Dendritic cell treated with granulocyte-macrophage colony-stimulating factor and Interleukin-4, amounts not matched to agents 40 ng/mL and 50 ng/mL, for 4 days (primary cell): ENCODE measurements at regions of chr10 and their contacts with region 1.

Region 1: DNA sequence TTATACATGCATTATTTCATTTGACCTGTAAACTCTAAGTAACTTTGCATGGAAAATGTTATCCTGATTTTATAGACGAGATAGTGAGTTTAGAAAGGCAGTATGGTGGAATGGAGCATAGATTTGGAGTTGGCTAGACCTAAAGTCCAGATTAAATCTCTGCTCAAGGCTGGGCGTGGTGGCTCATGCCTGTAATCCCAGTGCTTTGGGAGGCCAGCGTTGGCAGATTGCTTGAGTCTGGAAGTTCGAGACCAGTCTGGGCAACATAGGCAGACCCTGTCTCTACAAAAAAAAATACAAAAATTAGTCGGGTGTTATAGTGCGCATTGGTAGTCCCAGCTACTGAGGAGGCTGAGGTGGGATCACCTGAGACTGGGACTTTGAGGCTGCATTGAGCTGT is 9.4 kb downstream of the PTEN start:
- H3K4me3 Mint-ChIP-seq: no peak overlapping the region
- H3K27ac Mint-ChIP-seq: no peak overlapping the region
- H3K4me1 Mint-ChIP-seq: peaks cover 18% of the 10 kb centered on the region
- H3K27me3 Mint-ChIP-seq: no peaks in the 10 kb centered on the region

Region 2: GRCh38 chr10:87915989-87916388 is 43.2 kb after region 1 on chr10:
- intact Hi-C with region 1: loop called (anchors 5 kb)
- H3K4me3 Mint-ChIP-seq: no peak overlapping the region
- H3K27ac Mint-ChIP-seq: no peak overlapping the region
- H3K4me1 Mint-ChIP-seq: peaks cover 52% of the 10 kb centered on the region
- H3K27me3 Mint-ChIP-seq: no peaks in the 10 kb centered on the region

Region 3: DNA sequence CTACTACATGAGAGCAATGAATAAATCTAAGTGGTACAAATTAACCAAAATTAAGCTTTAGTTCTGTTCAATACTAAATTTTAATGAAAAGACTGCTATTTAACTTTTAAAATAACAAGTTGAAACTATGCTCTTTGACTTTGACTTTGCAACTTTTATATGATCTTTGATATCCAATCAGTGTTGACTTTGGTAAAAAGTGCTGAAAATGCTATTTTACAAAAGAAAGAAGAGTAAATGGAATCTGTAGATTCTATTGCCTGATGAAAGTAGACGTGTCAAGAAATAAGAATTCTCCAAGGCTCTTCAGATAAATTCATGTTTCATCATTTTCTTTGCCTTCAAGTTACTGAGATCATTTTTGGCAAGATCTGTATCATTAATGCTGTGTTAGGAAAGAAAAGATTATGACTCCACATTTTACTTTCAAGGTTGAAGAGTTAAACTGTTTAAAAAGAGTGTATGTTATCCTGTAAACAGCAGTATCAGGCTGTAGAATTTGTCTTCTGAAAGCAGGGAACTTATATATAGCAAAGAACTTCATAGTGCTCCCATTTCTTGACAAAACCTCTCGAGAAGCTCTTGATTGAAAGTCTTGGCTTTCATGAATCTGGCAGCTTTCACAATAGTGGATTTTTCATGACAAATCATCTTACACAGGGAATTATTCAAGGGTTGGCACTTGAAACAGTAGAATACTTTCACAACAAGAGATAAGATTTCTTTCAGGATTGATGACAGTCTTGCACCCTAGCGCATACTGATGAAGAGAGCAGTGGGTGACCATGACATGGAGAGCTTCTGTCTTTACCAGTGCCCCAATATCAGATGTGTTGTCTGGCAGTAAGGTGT is 62.7 kb after region 1 on chr10:
- intact Hi-C with region 1: loop called (anchors 5 kb)
- H3K4me3 Mint-ChIP-seq: no peak overlapping the region
- H3K27ac Mint-ChIP-seq: no peak overlapping the region
- H3K4me1 Mint-ChIP-seq: peaks cover 12% of the 10 kb centered on the region
- H3K27me3 Mint-ChIP-seq: no peaks in the 10 kb centered on the region